PC-9 (cell line): ENCODE measurements at regions of chr4 and their contacts with region 1.

Region 1: DNA sequence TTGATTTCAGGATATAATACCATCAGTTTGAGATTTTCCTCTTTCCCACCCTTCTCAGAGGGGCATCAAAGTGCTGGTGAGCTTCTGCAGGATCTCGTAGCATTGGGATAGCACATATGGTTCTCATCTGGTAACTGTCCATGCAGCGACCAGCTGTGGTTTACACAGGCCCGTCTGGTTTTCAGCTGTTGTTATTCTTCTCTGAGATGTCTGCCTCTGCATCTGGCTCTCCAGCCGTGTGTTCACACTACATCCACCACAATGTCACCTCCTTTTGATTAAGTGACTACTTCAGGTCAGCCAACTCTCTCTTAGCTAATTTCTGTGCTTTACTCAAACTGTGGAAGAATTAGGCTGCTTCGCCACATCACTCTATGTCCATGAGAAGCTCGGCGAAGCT is 676.7 kb upstream of the TENM3 start:
- DNase-seq: no peak
- H3K4me3 ChIP-seq: no peak overlapping the region
- H3K27ac ChIP-seq: no peak overlapping the region
- H3K4me1 ChIP-seq: no peaks in the 10 kb centered on the region
- H3K27me3 ChIP-seq: no peaks in the 10 kb centered on the region
- CTCF ChIP-seq: no peak

Region 2: GRCh38 chr4:181528570-181529184 is 37.8 kb before region 1 on chr4:
- CTCF ChIA-PET with region 1: no interaction called
- POLR2A ChIA-PET with region 1: no interaction called
- intact Hi-C with region 1: no loop called
- DNase-seq: peak; percentile 40 to 50
- H3K4me3 ChIP-seq: no peak overlapping the region
- H3K27ac ChIP-seq: no peak overlapping the region
- H3K4me1 ChIP-seq: no peaks in the 10 kb centered on the region
- H3K27me3 ChIP-seq: no peaks in the 10 kb centered on the region
- CTCF ChIP-seq: peak; percentile 81

Region 3: GRCh38 chr4:181608181-181608580 is 41.7 kb after region 1 on chr4:
- CTCF ChIA-PET with region 1: no interaction called
- POLR2A ChIA-PET with region 1: interaction called, 26 read pairs
- intact Hi-C with region 1: no loop called
- DNase-seq: no peak
- H3K4me3 ChIP-seq: no peak overlapping the region
- H3K27ac ChIP-seq: no peak overlapping the region
- H3K4me1 ChIP-seq: no peaks in the 10 kb centered on the region
- H3K27me3 ChIP-seq: no peaks in the 10 kb centered on the region; the same call in 1 of the 2 replicates
- CTCF ChIP-seq: no peak